ENCODE measurements at regions of chr2 and their contacts with region 1.

Region 1: GRCh38 chr2:210099940-210100339 is 71.3 kb downstream of the KANSL1L start:
- DNase-seq: no peak
- ATAC-seq: no peak
- H3K4me3 ChIP-seq: no peak overlapping the region
- H3K27ac ChIP-seq: no peak overlapping the region
- H3K4me1 ChIP-seq: no peaks in the 10 kb centered on the region
- H3K27me3 ChIP-seq: no peaks in the 10 kb centered on the region
- CTCF ChIP-seq: no peak
- POLR2A ChIP-seq: no peak

Region 2: GRCh38 chr2:209614690-209615369 is 485.1 kb before region 1 on chr2:
- intact Hi-C with region 1: no loop called
- DNase-seq: no peak
- ATAC-seq: no peak
- H3K4me3 ChIP-seq: no peak overlapping the region
- H3K27ac ChIP-seq: no peak overlapping the region
- H3K4me1 ChIP-seq: no peaks in the 10 kb centered on the region
- H3K27me3 ChIP-seq: no peaks in the 10 kb centered on the region
- CTCF ChIP-seq: no peak
- POLR2A ChIP-seq: no peak

Region 3: DNA sequence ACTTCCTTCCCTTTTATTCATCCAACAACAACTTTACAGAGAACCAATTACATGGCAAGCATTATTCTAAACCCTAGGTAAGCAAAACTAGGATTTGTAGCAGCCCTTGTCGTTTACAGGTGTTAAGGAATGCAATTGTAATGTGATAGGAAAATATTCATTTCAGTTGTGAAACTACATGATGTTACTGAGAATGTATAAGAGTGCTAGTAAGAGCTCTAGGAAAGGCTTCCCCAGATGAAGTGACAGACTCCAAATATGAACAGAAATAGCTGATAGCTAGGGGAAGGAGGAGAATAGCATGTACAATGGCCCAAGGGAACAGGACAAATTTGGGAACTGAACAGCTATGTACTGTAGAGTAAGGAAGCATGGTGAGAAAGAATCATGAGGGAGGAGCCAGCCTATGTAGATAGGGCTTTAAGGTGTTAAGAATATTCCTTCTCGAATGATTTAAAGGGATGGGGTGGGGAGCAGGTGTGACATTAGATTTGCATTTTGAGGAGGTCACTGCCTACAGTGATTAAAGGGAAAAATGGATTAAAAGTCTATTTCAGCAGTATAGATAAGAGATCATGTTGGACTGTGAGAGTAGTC is 65.8 kb before region 1 on chr2:
- intact Hi-C with region 1: no loop called
- DNase-seq: no peak
- ATAC-seq: peak in 1 of 4 donors; percentile 50
- H3K4me3 ChIP-seq: no peak overlapping the region
- H3K27ac ChIP-seq: no peak overlapping the region
- H3K4me1 ChIP-seq: no peaks in the 10 kb centered on the region
- H3K27me3 ChIP-seq: no peaks in the 10 kb centered on the region
- CTCF ChIP-seq: no peak
- POLR2A ChIP-seq: no peak

Region 4: DNA sequence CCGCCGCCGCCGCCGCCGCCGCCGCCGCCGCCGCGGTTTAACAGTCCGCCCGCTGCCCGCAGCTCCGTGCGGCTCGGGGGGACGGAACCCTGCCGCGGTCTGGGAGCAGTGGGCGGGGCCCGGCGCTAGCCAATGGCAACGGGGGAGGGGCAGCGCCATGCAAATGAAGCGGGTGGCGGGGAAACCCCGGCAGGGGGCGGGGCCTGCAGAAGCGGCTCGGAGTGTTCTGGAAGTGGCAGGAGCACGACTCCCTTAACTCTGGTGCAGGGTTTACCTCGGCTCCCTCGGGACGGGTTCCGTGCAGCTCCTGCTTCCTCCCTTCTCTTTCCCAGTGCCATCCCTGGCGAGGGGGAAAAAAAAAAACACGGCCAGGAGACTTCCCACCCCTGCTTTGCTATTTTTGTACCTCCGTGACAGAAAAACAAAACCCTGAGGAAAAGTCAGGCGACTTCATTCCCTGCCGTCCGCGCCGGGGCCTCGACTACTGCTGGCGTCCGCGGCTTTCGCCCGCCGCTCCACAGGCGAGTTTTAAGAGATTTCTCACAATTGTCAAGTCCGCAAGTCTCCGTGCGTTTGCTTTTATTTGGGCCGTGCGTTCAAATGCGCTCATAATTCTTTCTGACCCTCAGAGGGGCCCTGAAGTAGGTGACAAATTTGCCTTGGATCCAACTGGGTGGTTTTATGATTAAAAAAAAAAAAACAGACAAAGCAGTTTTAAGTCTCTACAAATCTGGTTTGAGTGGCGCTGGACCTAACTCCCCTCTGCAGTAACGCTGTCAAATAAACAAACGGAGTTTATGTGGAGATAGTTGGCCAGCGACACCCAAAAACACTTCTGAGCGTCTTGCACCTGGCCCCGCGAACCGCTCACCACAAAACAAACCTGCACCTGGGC is 71.6 kb after region 1 on chr2 and contains the start of gene KANSL1L:
- intact Hi-C with region 1: loop called in 1 of 10 experiments (anchors 10 kb)
- DNase-seq: peak; percentile 99 to 100 (median 99)
- ATAC-seq: peak; percentile 91 to 97 (median 94)
- H3K4me3 ChIP-seq: peak within 1 kb of the TSS; percentile 74 to 97 (median 90)
- H3K27ac ChIP-seq: peak within 1 kb of the TSS; percentile 97 to 100 (median 99)
- H3K4me1 ChIP-seq: peaks cover 3 to 41% (median 26%) of the 10 kb centered on the region in 12 donors
- H3K27me3 ChIP-seq: no peaks in the 10 kb centered on the region
- CTCF ChIP-seq: peak in 2 of 12 donors; percentile 4 to 9
- POLR2A ChIP-seq: peak; percentile 65 to 88
- total RNA-seq, gene KANSL1L: 12.0 to 24.9 (median 18.0) TPM

Measured in heart left ventricle (tissue), 16 donors.